Breast epithelium (tissue), 4 donors: ENCODE measurements at regions of chrX and their contacts with region 1.

Region 1: GRCh38 chrX:150537851-150538250 is 30.6 kb upstream of the MTM1 start:
- DNase-seq: no peak
- H3K4me3 ChIP-seq: no peak overlapping the region
- H3K27ac ChIP-seq: no peak overlapping the region
- H3K4me1 ChIP-seq: no peaks in the 10 kb centered on the region
- H3K27me3 ChIP-seq: peaks cover 0 to 12% of the 10 kb centered on the region in 2 donors
- CTCF ChIP-seq: no peak
- POLR2A ChIP-seq: no peak

Region 2: DNA sequence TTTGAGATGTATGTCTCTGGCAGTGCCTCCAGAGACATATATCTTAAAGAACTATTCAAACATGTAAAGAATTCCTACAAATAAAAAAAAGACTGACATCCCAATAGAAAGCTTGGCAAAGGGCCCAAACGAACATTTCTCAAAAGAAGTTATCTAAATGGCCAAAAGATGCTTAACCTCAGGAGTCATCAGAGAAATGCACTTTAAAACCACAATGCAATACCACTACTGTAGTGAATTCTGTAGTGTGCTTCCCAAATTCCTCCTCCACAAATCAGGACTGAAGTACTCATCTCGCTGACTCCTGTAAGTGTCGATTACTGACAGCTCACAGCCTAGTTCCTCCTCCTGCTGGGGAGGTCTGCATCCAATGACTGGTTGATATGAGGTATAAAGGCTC is 303.7 kb before region 1 on chrX:
- intact Hi-C with region 1: no loop called
- DNase-seq: no peak
- H3K4me3 ChIP-seq: no peak overlapping the region
- H3K27ac ChIP-seq: no peak overlapping the region
- H3K4me1 ChIP-seq: no peaks in the 10 kb centered on the region
- H3K27me3 ChIP-seq: peaks cover 0 to 3% of the 10 kb centered on the region in 2 donors
- CTCF ChIP-seq: no peak
- POLR2A ChIP-seq: no peak

Region 3: DNA sequence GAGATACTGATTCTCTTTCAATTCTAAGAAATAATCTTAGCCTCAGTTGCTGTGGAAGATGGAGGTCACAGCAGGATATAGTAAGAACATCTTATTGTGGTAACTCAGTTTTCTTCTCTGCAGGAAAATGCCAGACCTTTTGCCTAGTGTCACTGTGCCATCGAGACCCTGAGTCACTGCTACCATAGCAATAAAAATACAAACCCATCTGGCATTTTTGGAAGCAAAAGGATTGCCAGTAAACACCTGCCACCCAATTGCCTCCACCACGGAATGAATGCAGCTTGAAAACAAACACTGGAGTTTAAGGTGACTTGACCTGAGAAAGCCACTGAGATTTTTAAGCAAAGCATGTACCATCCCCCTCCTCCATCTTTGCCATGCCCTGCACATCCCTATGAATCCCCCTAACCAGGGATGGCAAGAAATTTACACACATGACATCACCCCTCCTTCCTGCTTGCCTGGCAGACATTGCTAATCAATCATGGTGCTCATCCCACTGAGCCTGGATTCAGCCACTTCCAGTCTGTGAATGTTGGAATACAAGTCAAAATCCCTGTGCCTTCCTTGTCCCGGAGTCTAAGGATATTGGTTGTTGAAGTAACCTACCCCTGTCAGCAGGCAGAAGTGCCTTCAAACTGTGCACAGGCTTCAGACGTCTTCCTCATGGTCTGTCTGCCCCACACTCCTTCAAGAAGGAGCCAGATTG is 234.3 kb before region 1 on chrX:
- intact Hi-C with region 1: no loop called
- DNase-seq: no peak
- H3K4me3 ChIP-seq: no peak overlapping the region
- H3K27ac ChIP-seq: no peak overlapping the region
- H3K4me1 ChIP-seq: no peaks in the 10 kb centered on the region
- H3K27me3 ChIP-seq: peaks cover 0 to 22% of the 10 kb centered on the region in 2 donors
- CTCF ChIP-seq: no peak
- POLR2A ChIP-seq: no peak

Region 4: DNA sequence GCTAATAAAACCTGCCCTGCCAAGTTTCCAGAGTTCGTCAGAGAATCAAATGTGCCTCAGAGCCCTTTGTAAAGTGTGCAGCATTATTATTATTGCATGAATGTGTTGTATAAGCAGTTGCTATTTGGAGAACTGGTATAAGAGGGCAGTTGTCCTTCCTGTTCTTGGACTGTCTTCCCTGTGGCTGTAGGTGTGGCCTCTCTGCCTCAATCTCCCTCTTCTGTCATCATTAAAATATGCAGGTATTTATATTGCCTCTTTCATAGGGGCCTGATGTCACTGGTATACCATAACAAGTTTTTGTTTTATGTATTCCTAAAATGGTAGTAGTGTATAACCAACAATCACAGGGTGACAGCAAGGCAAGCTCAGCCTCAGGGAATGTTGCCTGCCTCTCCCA is 34.4 kb after region 1 on chrX:
- intact Hi-C with region 1: loop called (anchors 1 kb)
- DNase-seq: no peak
- H3K4me3 ChIP-seq: no peak overlapping the region
- H3K27ac ChIP-seq: no peak overlapping the region
- H3K4me1 ChIP-seq: no peaks in the 10 kb centered on the region
- H3K27me3 ChIP-seq: peaks cover 0 to 7% of the 10 kb centered on the region in 2 donors
- CTCF ChIP-seq: no peak
- POLR2A ChIP-seq: no peak

Region 5: DNA sequence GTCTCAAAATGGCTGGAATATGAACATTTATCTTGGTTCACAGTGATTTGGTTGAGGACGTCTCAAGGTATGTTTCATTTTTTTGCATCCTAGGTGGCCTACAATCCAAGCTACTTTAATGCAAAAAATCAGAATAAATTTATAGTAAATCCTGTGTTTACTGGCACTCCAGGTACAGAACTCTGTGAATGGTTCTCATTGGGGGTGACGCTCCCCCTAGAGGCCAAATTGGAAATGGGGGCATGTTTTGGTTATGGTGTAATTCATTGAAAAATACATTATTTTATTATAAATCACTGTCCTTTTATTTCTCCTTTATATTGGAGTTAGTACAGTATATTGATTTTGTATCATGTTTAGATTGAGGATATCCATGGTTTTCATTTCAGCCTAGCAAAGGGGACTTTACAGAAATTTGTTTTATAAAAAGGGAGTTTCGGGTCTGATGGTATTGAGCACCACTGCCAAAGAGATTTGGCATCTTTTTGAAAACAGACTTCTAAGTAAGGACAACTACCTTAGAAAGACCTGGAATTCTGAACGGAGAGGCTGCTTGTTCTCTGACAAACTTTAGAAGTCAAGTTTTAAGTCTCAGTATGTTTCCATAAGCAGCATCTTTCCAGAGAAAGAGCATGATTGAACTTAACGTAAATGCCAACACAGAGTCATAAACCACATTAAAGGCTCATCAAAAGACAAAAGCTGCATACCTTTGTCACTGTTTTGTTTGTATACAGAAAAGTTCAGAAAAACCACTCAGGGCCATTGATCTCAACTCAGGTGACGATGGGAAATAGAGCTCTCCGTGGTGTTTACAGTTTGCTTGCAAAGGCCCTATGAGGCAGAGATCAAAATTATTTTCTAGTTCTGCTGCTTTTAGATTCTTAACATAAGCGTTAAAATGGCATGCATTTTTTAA is 50.0 kb after region 1 on chrX:
- intact Hi-C with region 1: no loop called
- DNase-seq: no peak
- H3K4me3 ChIP-seq: no peak overlapping the region
- H3K27ac ChIP-seq: no peak overlapping the region
- H3K4me1 ChIP-seq: no peaks in the 10 kb centered on the region
- H3K27me3 ChIP-seq: no peaks in the 10 kb centered on the region
- CTCF ChIP-seq: peak; percentile 28 to 30 (median 29)
- POLR2A ChIP-seq: no peak